Gastrocnemius medialis (tissue), 4 donors: ENCODE measurements at regions of chr16 and their contacts with region 1.

Region 1: DNA sequence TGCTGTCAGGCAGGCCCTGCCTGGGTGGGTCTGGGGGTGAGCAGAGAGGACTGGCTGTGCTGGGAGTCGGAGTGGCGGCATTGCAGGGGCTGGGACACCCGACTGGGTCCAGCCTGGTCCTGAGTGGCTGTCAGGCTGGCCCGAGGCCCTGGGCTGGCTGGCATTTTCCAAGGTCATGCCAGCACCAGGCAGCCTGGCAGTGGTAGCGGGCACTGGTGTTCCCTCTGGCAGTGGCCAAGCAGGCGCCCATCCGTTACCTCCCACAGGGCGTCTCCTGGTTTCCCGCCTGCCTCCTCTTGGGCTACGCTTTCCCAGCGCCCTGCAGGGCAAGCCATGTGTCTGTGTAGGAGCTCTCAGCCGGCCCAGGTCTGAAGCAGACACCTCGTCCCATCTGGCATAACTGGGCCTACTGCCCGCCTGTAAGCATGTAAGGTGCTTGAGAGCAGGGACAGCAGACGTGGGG is 5.7 kb upstream of the PKMYT1 start:
- DNase-seq: peak in 1 of 2 donors; percentile 75
- ATAC-seq: peak; percentile 11 to 60
- H3K4me3 ChIP-seq: no peak overlapping the region
- H3K27ac ChIP-seq: peak overlapping the region; percentile 40 to 79 (median 66)
- H3K4me1 ChIP-seq: peaks cover 23% of the 10 kb centered on the region in 2 donors
- H3K27me3 ChIP-seq: no peaks in the 10 kb centered on the region
- CTCF ChIP-seq: no peak
- POLR2A ChIP-seq: no peak

Region 2: DNA sequence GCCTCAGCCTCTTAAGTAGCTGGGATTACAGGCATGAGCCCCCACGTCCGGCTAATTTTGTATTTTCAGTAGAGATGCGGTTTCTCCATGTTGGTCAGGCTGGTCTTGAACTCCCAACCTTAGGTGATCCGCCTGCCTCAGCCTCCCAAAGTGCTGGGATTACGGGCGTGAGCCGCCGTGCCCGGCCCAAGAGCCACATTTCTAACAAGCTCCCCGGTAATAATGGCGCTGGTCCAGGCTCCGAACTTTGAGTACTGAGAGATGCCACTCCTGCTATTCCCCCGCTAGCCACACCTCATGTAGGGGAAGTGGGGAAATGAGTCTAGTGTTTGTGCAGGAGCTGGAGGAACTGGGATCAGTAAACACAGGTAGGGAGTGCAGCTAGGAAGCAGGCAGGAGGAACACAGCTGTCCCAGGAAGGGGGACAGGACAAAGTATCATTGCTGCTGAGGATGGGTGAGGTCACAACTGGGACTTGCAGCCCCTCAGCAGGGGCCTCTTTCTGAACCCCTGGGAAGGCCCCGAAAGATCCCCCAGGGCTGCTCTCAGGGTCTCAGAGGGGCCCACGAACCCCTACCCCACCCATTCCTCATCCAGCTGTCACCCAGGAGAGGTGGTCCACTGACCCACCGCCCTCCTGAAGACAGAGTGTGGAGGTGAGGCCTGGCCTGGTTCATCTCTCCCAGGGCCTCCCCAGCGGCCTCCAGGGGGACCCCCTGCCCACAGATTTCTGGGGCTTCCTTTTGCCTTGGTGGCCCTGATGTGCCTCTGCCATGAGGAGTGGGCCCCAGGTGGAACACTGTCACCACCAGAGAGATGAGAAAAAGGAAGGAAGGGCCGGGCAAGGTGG is 25.5 kb before region 1 on chr16:
- in situ Hi-C with region 1: no loop called
- intact Hi-C with region 1: loop called (anchors 1 kb)
- DNase-seq: no peak
- ATAC-seq: no peak
- H3K4me3 ChIP-seq: no peak overlapping the region
- H3K27ac ChIP-seq: no peak overlapping the region
- H3K4me1 ChIP-seq: peaks cover 7 to 24% of the 10 kb centered on the region in 2 donors
- H3K27me3 ChIP-seq: peaks cover 70 to 78% (median 77%) of the 10 kb centered on the region in 3 donors
- CTCF ChIP-seq: no peak
- POLR2A ChIP-seq: no peak

Region 3: GRCh38 chr16:3030403-3031212 is 44.7 kb after region 1 on chr16:
- in situ Hi-C with region 1: no loop called
- intact Hi-C with region 1: loop called (anchors 1 kb)
- DNase-seq: no peak
- ATAC-seq: no peak
- H3K4me3 ChIP-seq: no peak overlapping the region
- H3K27ac ChIP-seq: no peak overlapping the region
- H3K4me1 ChIP-seq: peaks cover 0 to 8% of the 10 kb centered on the region in 2 donors
- H3K27me3 ChIP-seq: peaks cover 44 to 61% (median 52%) of the 10 kb centered on the region in 3 donors
- CTCF ChIP-seq: no peak
- POLR2A ChIP-seq: no peak